ENCODE measurements at regions of chr6 and their contacts with region 1.

Region 1: DNA sequence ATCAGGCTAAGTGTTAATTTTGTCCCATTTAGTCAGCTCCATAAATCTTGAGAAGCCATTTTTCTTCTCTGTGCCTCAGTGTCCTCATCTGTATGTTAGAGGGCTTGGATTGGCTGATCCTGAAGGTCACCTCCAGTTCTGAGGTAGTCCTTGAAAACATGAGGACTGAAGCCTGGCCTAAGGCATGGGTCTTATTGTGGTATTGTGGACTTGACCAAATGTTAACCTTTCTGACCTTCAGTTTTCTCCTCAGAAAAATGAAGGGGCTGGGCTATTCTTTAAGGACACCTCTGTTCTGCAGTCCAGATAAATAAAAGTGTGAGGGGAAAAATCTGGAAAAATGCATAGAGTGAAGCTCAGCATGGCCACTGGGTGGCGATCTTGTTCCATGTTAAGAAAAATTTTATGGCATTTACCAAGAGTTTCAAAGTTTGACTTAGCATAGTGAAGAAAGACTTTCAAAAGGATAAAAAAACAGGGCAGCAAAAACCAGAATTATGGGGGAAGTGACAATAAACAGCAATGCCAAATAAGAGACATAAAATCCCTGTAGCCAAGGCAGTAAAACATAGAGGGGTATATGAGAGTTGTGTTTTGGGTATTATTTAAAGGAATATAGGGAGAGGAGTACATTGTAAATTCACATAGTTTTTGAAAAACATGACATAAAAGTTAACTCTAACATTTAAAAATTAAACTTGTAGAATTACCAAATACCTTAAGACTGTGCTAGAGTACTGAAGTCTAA is 13.2 kb upstream of the TFB1M start:
- DNase-seq: peak; percentile 53 to 82
- H3K4me3 ChIP-seq: peak overlapping the region; percentile 39; the same call in 1 of the 2 replicates
- H3K4me3 Mint-ChIP-seq: peak overlapping the region; percentile 82
- H3K27ac Mint-ChIP-seq: peak overlapping the region; percentile 98
- H3K4me1 ChIP-seq: peaks cover 29% of the 10 kb centered on the region
- H3K4me1 Mint-ChIP-seq: peaks cover 25% of the 10 kb centered on the region
- H3K27me3 ChIP-seq: no peaks in the 10 kb centered on the region
- H3K27me3 Mint-ChIP-seq: no peaks in the 10 kb centered on the region
- CTCF ChIP-seq: peak; percentile 68 to 71

Region 2: GRCh38 chr6:155314092-155314772 is 13.3 kb before region 1 on chr6 and contains the start of gene TFB1M:
- CTCF ChIA-PET with region 1: interaction called, 6 read pairs
- POLR2A ChIA-PET with region 1: interaction called, 12 read pairs
- intact Hi-C with region 1: no loop called
- DNase-seq: peak; percentile 99
- H3K4me3 ChIP-seq: peak within 1 kb of the TSS; percentile 70
- H3K4me3 Mint-ChIP-seq: peak within 1 kb of the TSS; percentile 89
- H3K27ac Mint-ChIP-seq: peak within 1 kb of the TSS; percentile 86
- H3K4me1 ChIP-seq: no peaks in the 10 kb centered on the region
- H3K4me1 Mint-ChIP-seq: peaks cover 2% of the 10 kb centered on the region
- H3K27me3 ChIP-seq: no peaks in the 10 kb centered on the region
- H3K27me3 Mint-ChIP-seq: no peaks in the 10 kb centered on the region
- CTCF ChIP-seq: no peak
- total RNA-seq, gene TFB1M: 35.7 and 38.4 TPM in 2 replicates

Region 3: GRCh38 chr6:155380666-155381332 is 53.3 kb after region 1 on chr6:
- CTCF ChIA-PET with region 1: no interaction called
- POLR2A ChIA-PET with region 1: no interaction called
- intact Hi-C with region 1: loop called (anchors 5 kb)
- DNase-seq: no peak
- H3K4me3 ChIP-seq: no peak overlapping the region
- H3K4me3 Mint-ChIP-seq: no peak overlapping the region
- H3K27ac Mint-ChIP-seq: no peak overlapping the region
- H3K4me1 ChIP-seq: no peaks in the 10 kb centered on the region
- H3K4me1 Mint-ChIP-seq: no peaks in the 10 kb centered on the region
- H3K27me3 ChIP-seq: no peaks in the 10 kb centered on the region
- H3K27me3 Mint-ChIP-seq: no peaks in the 10 kb centered on the region
- CTCF ChIP-seq: no peak

Region 4: DNA sequence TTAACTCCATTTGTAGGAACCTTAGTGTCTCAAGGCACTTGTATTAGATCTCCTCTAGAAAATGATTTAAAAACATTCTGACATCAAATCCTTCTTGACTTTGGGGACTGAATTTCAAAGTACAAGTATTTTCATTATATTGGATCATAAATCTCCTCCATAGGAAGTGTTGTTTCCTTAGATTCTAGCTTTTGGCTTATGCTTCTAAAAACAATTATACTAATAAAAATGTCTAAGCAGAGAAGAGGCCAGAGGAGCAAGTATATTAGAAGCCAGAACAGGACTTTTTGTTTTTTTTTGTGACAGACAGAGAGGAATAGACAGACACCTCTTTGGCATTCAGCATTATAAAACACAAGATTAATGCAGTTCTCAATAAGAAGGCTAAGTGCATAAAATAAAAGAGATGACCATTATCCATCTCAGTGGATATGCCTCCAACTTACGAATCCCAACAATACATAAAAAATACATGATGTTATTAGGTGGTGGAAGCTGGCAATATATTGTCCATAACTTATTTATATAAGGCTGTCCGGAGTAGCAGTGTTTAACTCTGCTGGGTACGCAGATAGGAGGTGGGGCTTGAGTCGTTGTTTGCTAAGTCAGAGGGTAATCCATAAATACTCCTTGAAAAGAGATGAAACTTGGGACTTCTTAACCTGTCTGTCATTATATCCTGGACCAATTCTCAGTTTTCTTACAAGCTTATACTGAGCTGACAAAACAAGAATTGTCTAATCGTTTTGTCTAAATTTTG is 160.1 kb after region 1 on chr6:
- CTCF ChIA-PET with region 1: interaction called, 5 read pairs
- POLR2A ChIA-PET with region 1: interaction called, 3 read pairs
- intact Hi-C with region 1: loop called (anchors 1 kb)
- DNase-seq: no peak
- H3K4me3 ChIP-seq: no peak overlapping the region
- H3K4me3 Mint-ChIP-seq: no peak overlapping the region
- H3K27ac Mint-ChIP-seq: no peak overlapping the region
- H3K4me1 ChIP-seq: peaks cover 33% of the 10 kb centered on the region
- H3K4me1 Mint-ChIP-seq: peaks cover 12% of the 10 kb centered on the region
- H3K27me3 ChIP-seq: no peaks in the 10 kb centered on the region
- H3K27me3 Mint-ChIP-seq: no peaks in the 10 kb centered on the region
- CTCF ChIP-seq: no peak

Region 5: GRCh38 chr6:155530219-155530834 is 202.8 kb after region 1 on chr6:
- CTCF ChIA-PET with region 1: no interaction called
- POLR2A ChIA-PET with region 1: no interaction called
- intact Hi-C with region 1: loop called (anchors 1 kb)
- DNase-seq: peak in 1 of 2 experiments; percentile 36
- H3K4me3 ChIP-seq: no peak overlapping the region
- H3K4me3 Mint-ChIP-seq: no peak overlapping the region
- H3K27ac Mint-ChIP-seq: no peak overlapping the region
- H3K4me1 ChIP-seq: peaks cover 9% of the 10 kb centered on the region
- H3K4me1 Mint-ChIP-seq: no peaks in the 10 kb centered on the region
- H3K27me3 ChIP-seq: no peaks in the 10 kb centered on the region
- H3K27me3 Mint-ChIP-seq: no peaks in the 10 kb centered on the region
- CTCF ChIP-seq: peak; percentile 58 to 76

Region 6: GRCh38 chr6:155645325-155645724 is 317.8 kb after region 1 on chr6:
- CTCF ChIA-PET with region 1: no interaction called
- POLR2A ChIA-PET with region 1: no interaction called
- intact Hi-C with region 1: loop called (anchors 10 kb)
- DNase-seq: no peak
- H3K4me3 ChIP-seq: no peak overlapping the region
- H3K4me3 Mint-ChIP-seq: no peak overlapping the region
- H3K27ac Mint-ChIP-seq: no peak overlapping the region
- H3K4me1 ChIP-seq: peaks cover 16% of the 10 kb centered on the region; the same call in 1 of the 2 replicates
- H3K4me1 Mint-ChIP-seq: peaks cover 11% of the 10 kb centered on the region
- H3K27me3 ChIP-seq: no peaks in the 10 kb centered on the region
- H3K27me3 Mint-ChIP-seq: no peaks in the 10 kb centered on the region
- CTCF ChIP-seq: no peak

Region 7: DNA sequence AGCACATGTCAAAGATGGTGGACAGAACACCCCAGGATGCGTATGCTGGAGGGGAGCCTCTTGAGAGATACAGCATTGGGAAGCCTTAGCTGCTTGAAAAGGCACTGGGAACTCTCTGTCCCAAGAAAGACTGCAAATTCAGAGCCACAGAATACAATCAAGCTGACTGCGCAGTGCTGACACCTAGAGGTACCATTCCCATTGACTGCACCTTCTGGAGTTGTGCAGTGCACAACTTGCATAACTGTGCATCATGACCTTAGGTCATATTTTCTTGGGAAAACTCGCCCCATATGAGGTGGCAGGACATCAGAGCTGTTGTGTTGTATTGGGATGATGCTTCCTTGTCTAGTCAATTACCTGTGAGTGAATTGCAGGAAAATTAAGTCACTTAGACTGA is 774.6 kb after region 1 on chr6:
- CTCF ChIA-PET with region 1: no interaction called
- POLR2A ChIA-PET with region 1: no interaction called
- intact Hi-C with region 1: loop called (anchors 1 kb)
- DNase-seq: peak; percentile 30 to 36
- H3K4me3 ChIP-seq: no peak overlapping the region
- H3K4me3 Mint-ChIP-seq: no peak overlapping the region
- H3K27ac Mint-ChIP-seq: no peak overlapping the region
- H3K4me1 ChIP-seq: no peaks in the 10 kb centered on the region
- H3K4me1 Mint-ChIP-seq: no peaks in the 10 kb centered on the region
- H3K27me3 ChIP-seq: no peaks in the 10 kb centered on the region
- H3K27me3 Mint-ChIP-seq: peaks cover 6% of the 10 kb centered on the region
- CTCF ChIP-seq: peak; percentile 42 to 53

Measured in Caco-2 (cell line).